Prostate gland (tissue), 2 donors: ENCODE measurements at regions of chr20 and their contacts with region 1.

Region 1: GRCh38 chr20:22339091-22339881 is 245.1 kb downstream of the FOXA2 start:
- DNase-seq: peak; percentile 67
- H3K4me3 ChIP-seq: no peak overlapping the region
- H3K27ac ChIP-seq: no peak overlapping the region
- H3K4me1 ChIP-seq: no peaks in the 10 kb centered on the region
- H3K27me3 ChIP-seq: no peaks in the 10 kb centered on the region
- CTCF ChIP-seq: peak; percentile 72 to 87 (median 78)
- POLR2A ChIP-seq: no peak

Region 2: DNA sequence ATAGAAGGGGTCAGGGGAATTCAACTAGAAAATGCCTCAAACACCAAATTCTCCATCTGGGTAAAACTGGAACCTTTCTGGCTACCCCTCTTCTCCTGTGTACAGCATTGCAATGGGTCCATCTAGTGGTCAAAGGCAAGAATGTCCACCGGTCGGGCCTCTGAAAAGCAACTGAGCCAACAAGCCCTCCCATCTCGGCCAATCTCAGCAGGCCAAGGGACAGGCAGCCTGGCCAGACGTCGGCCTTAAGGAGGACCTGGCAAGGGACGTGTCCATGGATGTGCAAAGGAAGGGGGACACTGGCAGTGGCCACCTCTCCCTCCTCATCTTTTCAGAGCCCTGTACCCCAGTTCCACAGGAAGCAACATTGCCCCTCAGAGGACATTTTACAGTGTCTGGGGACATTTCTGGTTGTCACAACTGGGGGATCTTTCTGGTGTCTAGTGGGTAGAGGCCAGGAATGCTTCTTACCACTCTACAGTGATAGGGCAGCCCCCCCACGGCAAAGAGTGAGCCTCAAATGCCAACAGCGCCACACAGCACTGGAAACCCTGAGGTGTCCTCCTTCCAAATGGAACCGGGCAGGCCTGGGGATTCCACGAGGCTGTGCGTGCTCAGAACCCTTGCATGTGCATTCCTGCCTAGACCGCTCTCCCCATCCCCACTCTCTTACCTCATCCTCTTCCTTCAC is 344.9 kb after region 1 on chr20:
- intact Hi-C with region 1: loop called (anchors 1 kb)
- DNase-seq: peak; percentile 60
- H3K4me3 ChIP-seq: no peak overlapping the region
- H3K27ac ChIP-seq: no peak overlapping the region
- H3K4me1 ChIP-seq: no peaks in the 10 kb centered on the region
- H3K27me3 ChIP-seq: no peaks in the 10 kb centered on the region
- CTCF ChIP-seq: peak; percentile 42 to 86 (median 82)
- POLR2A ChIP-seq: no peak